Adrenal gland (tissue), 19 donors: ENCODE measurements at regions of chr3 and their contacts with region 1.

Region 1: GRCh38 chr3:151439652-151440129 is 21.2 kb downstream of the IGSF10 start:
- DNase-seq: peak in 5 of 7 donors; percentile 33 to 55 (median 45)
- H3K4me3 ChIP-seq: no peak overlapping the region
- H3K27ac ChIP-seq: no peak overlapping the region
- H3K4me1 ChIP-seq: peaks cover under 1% of the 10 kb centered on the region in 2 donors
- H3K27me3 ChIP-seq: no peaks in the 10 kb centered on the region
- CTCF ChIP-seq: peak; percentile 80 to 93 (median 86)
- POLR2A ChIP-seq: no peak

Region 2: GRCh38 chr3:150737874-150738713 is 701.6 kb before region 1 on chr3:
- intact Hi-C with region 1: no loop called
- DNase-seq: peak; percentile 77 to 92 (median 91)
- H3K4me3 ChIP-seq: no peak overlapping the region
- H3K27ac ChIP-seq: peak overlapping the region; percentile 85 to 91 (median 87)
- H3K4me1 ChIP-seq: peaks cover 54 to 99% of the 10 kb centered on the region in 2 donors
- H3K27me3 ChIP-seq: no peaks in the 10 kb centered on the region
- CTCF ChIP-seq: no peak
- POLR2A ChIP-seq: peak in 1 of 2 donors; percentile 55

Region 3: DNA sequence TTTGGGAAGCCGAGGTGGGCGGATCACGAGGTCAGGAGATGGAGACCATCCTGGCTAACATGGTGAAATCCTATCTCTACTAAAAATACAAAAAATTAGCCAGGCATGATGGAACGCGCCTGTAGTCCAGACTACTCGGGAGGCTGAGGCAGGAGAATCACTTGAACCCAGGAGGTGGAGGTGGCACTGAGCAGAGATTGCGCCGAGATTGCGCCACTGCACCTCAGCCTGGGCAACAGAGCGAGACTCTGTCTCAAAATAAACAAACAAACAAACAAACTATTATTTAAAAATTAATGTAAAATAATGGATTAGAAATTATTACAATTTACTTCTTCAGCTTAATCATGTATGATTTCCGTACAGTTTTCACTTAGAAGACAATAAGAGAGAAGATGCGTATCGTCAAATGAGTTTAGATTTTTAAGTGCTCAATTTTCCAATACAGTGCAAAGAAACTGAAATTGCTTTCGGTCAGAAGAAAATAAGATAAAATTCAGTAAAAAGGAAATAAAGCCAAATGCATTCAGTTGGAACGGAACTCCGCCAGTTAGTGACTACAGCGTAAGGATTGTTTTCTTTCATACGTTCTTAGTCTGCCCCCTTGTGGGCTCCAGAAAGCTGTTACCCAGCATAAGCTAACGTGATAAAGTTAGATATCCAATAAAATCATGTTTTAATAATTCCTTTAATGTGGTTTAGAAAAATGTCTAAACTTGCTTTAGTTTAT is 399.1 kb after region 1 on chr3:
- intact Hi-C with region 1: loop called in 1 of 2 experiments (anchors 5 kb)
- DNase-seq: peak; percentile 57 to 80 (median 70)
- H3K4me3 ChIP-seq: peak overlapping the region in 1 of 4 donors; percentile 46
- H3K27ac ChIP-seq: no peak overlapping the region
- H3K4me1 ChIP-seq: peaks cover 9 to 18% of the 10 kb centered on the region in 2 donors
- H3K27me3 ChIP-seq: no peaks in the 10 kb centered on the region
- CTCF ChIP-seq: peak; percentile 58 to 91 (median 88)
- POLR2A ChIP-seq: no peak

Region 4: DNA sequence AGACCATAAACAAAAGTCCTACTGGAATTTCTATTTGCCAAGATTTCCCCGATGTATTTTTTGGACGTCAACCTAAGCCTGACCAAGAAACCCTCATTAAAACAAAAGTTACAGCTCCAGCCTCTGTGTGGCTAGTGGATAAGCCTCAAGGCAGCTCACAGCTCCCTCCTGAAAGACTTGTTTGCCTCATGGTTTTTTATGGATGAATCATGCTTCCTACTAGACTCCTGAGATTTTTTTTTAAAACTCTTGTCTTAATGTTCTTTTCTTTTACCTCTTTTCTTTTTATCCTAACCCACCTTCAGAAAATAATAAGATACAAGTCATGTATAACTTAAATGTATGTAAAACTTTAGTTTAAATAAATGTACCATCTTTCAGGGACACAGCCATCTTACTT is 486.2 kb after region 1 on chr3:
- intact Hi-C with region 1: loop called in 1 of 2 experiments (anchors 10 kb)
- DNase-seq: no peak
- H3K4me3 ChIP-seq: no peak overlapping the region
- H3K27ac ChIP-seq: no peak overlapping the region
- H3K4me1 ChIP-seq: peaks cover 9% of the 10 kb centered on the region in 2 donors
- H3K27me3 ChIP-seq: no peaks in the 10 kb centered on the region
- CTCF ChIP-seq: no peak
- POLR2A ChIP-seq: no peak